Ascending aorta (tissue), 2 donors: ENCODE measurements at regions of chr2 and their contacts with region 1.

Region 1: DNA sequence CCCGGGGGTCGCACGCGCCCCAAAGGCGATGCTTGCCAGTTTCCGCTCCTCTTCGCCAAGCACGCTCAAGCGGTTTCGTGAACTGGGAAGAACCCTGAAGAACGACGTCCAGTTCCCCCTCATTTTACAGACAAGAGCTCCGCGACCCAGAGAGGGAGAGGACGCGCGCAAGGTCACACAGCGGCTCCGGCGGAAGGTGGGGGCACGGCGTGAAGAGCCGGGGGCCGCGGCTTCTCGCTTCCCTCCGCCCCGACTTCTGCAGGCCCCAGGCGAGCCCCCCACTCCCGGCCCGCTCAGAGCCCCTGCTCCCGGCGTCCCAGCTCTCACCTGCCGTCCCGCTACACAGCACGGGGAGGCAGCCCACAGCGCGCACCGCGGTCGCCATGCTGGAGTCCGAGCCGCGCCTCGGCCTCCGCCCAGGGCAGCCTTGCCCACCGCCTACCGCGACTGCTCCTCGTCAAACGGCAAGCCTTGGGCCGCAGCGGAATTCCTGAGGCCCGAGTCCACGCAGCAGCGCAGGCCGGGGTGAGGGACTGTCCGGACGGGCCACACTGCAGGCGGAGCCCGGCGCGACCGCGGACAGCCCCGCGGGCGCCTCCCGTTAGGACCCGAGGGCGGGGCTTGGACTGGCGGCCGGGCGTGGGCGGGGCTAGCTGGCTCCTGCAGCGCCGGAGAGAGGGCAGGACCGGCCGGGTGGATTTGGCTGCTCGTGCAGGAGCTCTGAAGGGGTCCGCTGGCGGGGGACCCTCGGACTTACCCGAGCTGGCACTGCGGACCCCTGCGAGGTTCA is at the start of gene MRPS5:
- DNase-seq: peak; percentile 26 to 89
- H3K4me3 ChIP-seq: peak within 1 kb of the TSS; percentile 87 to 99
- H3K27ac ChIP-seq: peak within 1 kb of the TSS; percentile 94 to 98
- H3K4me1 ChIP-seq: peaks cover 9 to 13% of the 10 kb centered on the region in 2 donors
- H3K27me3 ChIP-seq: no peaks in the 10 kb centered on the region
- CTCF ChIP-seq: peak in 2 of 3 experiments; percentile 18 to 28
- total RNA-seq, gene MRPS5: 30.1 TPM

Region 2: GRCh38 chr2:95207111-95207961 is 85.7 kb after region 1 on chr2 and contains the start of gene ZNF892:
- intact Hi-C with region 1: loop called (anchors 1 kb)
- DNase-seq: peak; percentile 38 to 94
- H3K4me3 ChIP-seq: peak within 1 kb of the TSS; percentile 52 to 89
- H3K27ac ChIP-seq: peak within 1 kb of the TSS; percentile 89 to 94
- H3K4me1 ChIP-seq: no peaks in the 10 kb centered on the region
- H3K27me3 ChIP-seq: no peaks in the 10 kb centered on the region
- CTCF ChIP-seq: peak in 2 of 3 experiments; percentile 44 to 59
- total RNA-seq, gene ZNF892: 1.4 TPM

Region 3: DNA sequence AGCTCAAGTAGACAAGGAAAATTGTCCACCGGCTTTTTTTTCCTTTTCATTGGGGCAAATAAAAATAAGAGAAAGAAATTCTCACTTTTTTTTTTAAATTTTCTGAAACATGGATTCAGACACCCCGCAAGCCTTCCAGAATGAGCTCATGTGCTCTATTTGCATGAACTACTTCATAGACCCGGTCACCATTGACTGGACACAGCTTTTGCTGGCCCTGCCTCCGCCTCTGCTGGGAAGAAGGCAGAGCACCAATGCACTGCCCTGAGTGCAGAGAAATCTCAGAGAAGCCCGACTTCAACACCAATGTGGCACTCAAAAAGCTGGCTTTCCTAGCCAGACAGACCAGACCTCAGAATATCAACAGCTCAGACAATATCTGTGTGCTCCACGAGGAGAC is 393.1 kb after region 1 on chr2:
- intact Hi-C with region 1: no loop called
- DNase-seq: no peak
- H3K4me3 ChIP-seq: no peak overlapping the region
- H3K27ac ChIP-seq: no peak overlapping the region
- H3K4me1 ChIP-seq: no peaks in the 10 kb centered on the region
- H3K27me3 ChIP-seq: no peaks in the 10 kb centered on the region
- CTCF ChIP-seq: no peak